ENCODE measurements at regions of chr17 and their contacts with region 1.

Region 1: GRCh38 chr17:6651357-6651918 is at the starts of genes C17orf100 and MED31:
- DNase-seq: peak; percentile 90 to 97 (median 94)
- ATAC-seq: peak; percentile 88
- H3K4me3 ChIP-seq: peak within 1 kb of the TSS; percentile 84 to 86
- H3K4me3 Mint-ChIP-seq: peak within 1 kb of the TSS; percentile 97
- H3K27ac ChIP-seq: peak within 1 kb of the TSS; percentile 99 to 100
- H3K27ac Mint-ChIP-seq: peak within 1 kb of the TSS; percentile 100
- H3K4me1 ChIP-seq: peaks cover 23% of the 10 kb centered on the region
- H3K4me1 Mint-ChIP-seq: peaks cover 69% of the 10 kb centered on the region
- H3K27me3 ChIP-seq: no peaks in the 10 kb centered on the region
- H3K27me3 Mint-ChIP-seq: no peaks in the 10 kb centered on the region
- CTCF ChIP-seq: no peak
- total RNA-seq, gene C17orf100: 0.39 to 0.73 TPM
- total RNA-seq, gene MED31: 21.4 to 25.6 TPM

Region 2: DNA sequence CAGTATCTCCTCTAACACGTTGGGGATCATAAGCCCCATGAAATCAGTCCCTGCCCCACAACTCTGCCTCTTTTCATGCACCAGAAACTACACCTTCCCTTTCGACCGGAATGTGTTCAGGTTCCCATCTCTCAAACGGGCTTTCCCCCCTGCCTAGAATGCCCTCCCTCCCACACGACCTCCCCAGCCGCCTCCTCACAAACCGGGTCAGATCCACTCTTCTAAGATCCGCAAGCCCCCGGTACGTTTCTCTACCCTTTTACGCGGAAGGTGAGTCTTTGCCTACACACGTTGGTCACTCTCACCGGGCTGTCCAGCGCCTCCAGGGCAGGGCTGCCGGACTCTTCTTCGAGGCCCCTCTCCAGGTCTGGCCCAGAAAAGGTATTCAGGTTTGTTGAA is 1183.4 kb before region 1 on chr17:
- CTCF ChIA-PET with region 1: no interaction called
- POLR2A ChIA-PET with region 1: no interaction called
- intact Hi-C with region 1: loop called in 1 of 2 experiments (anchors 10 kb)
- DNase-seq: peak in 4 of 9 experiments; percentile 9 to 45 (median 18)
- ATAC-seq: peak; percentile 16
- H3K4me3 ChIP-seq: peak overlapping the region; percentile 78 to 84
- H3K4me3 Mint-ChIP-seq: peak overlapping the region; percentile 81
- H3K27ac ChIP-seq: peak overlapping the region; percentile 49 to 53
- H3K27ac Mint-ChIP-seq: peak overlapping the region; percentile 46
- H3K4me1 ChIP-seq: peaks cover 10% of the 10 kb centered on the region
- H3K4me1 Mint-ChIP-seq: peaks cover 31% of the 10 kb centered on the region
- H3K27me3 ChIP-seq: no peaks in the 10 kb centered on the region
- H3K27me3 Mint-ChIP-seq: no peaks in the 10 kb centered on the region
- CTCF ChIP-seq: no peak

Region 3: GRCh38 chr17:6443692-6444569 is 207.5 kb before region 1 on chr17 and contains the start of gene PIMREG:
- CTCF ChIA-PET with region 1: no interaction called
- POLR2A ChIA-PET with region 1: no interaction called
- intact Hi-C with region 1: loop called (anchors 5 to 10 kb)
- DNase-seq: peak; percentile 79 to 91 (median 90)
- ATAC-seq: peak; percentile 96
- H3K4me3 ChIP-seq: peak within 1 kb of the TSS; percentile 68 to 94
- H3K4me3 Mint-ChIP-seq: peak within 1 kb of the TSS; percentile 85
- H3K27ac ChIP-seq: peak within 1 kb of the TSS; percentile 25 to 37
- H3K27ac Mint-ChIP-seq: peak within 1 kb of the TSS; percentile 77
- H3K4me1 ChIP-seq: peaks cover 6% of the 10 kb centered on the region
- H3K4me1 Mint-ChIP-seq: peaks cover 12% of the 10 kb centered on the region
- H3K27me3 ChIP-seq: no peaks in the 10 kb centered on the region
- H3K27me3 Mint-ChIP-seq: peaks cover 10% of the 10 kb centered on the region
- CTCF ChIP-seq: no peak
- total RNA-seq, gene PIMREG: not detected

Region 4: DNA sequence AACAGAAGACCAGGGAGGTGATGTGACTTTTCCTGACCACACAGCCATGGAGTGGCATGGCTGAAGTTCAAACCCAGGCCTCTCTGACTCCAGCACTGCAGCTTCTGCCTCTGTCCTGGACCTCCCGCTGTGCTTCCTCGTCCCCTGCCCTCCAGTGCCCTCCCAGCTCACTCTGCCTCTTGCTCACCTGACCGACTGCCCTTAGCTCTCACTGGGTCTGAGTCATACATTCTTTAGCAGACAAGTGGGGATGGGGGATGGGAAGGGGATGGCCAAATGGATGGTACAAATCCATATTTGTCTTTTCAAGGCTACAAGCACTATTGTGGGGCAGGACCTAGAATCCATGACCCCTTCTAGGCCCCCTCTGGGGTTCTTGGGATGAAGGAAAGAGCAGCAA is 128.1 kb before region 1 on chr17:
- CTCF ChIA-PET with region 1: no interaction called
- POLR2A ChIA-PET with region 1: no interaction called
- intact Hi-C with region 1: no loop called
- DNase-seq: no peak
- ATAC-seq: no peak
- H3K4me3 ChIP-seq: no peak overlapping the region
- H3K4me3 Mint-ChIP-seq: no peak overlapping the region
- H3K27ac ChIP-seq: no peak overlapping the region
- H3K27ac Mint-ChIP-seq: no peak overlapping the region
- H3K4me1 ChIP-seq: no peaks in the 10 kb centered on the region
- H3K4me1 Mint-ChIP-seq: no peaks in the 10 kb centered on the region
- H3K27me3 ChIP-seq: no peaks in the 10 kb centered on the region
- H3K27me3 Mint-ChIP-seq: no peaks in the 10 kb centered on the region
- CTCF ChIP-seq: no peak

Region 5: GRCh38 chr17:6753006-6753445 is 101.6 kb after region 1 on chr17:
- CTCF ChIA-PET with region 1: no interaction called
- POLR2A ChIA-PET with region 1: no interaction called
- intact Hi-C with region 1: loop called in 1 of 2 experiments (anchors 5 kb)
- DNase-seq: peak in 8 of 9 experiments; percentile 42 to 86 (median 56)
- ATAC-seq: peak; percentile 46
- H3K4me3 ChIP-seq: no peak overlapping the region
- H3K4me3 Mint-ChIP-seq: peak overlapping the region; percentile 4
- H3K27ac ChIP-seq: peak overlapping the region in 1 of 2 experiments; percentile 66
- H3K27ac Mint-ChIP-seq: peak overlapping the region; percentile 62
- H3K4me1 ChIP-seq: peaks cover 51% of the 10 kb centered on the region
- H3K4me1 Mint-ChIP-seq: peaks cover 45% of the 10 kb centered on the region
- H3K27me3 ChIP-seq: no peaks in the 10 kb centered on the region
- H3K27me3 Mint-ChIP-seq: no peaks in the 10 kb centered on the region
- CTCF ChIP-seq: no peak

Region 6: DNA sequence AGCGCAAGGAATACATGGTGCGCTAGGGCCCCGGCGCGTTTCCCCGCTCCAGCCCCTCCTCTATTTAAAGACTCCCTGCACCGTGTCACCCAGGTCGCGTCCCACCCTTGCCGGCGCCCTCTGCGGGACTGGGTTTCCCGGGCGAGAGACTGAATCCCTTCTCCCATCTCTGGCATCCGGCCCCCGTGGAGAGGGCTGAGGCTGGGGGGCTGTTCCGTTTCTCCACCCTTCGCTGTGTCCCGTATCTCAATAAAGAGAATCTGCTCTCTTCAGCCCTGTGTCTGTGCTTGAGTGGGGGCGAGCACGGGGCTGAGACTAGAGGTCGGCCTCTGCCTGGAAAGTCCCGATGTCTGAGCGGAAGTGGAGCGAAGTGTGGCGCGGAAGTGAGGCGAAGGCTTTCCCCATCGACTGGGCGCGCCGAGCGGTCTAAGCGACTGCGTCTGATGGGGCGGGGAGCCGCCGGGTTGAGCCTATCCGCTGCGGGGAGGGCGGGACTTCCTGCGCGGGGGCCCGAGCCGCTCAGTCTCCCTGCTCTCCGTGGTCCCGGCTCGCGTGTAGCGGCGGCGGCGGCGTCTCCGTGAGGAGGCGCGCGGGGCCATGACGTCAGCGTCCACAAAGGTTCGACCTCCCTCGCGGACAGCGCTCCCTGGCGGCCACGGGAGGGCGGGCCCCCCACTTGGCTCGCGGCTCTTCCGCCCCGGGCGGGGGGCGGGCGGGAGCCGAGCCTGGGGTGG is 363.0 kb after region 1 on chr17:
- CTCF ChIA-PET with region 1: no interaction called
- POLR2A ChIA-PET with region 1: no interaction called
- intact Hi-C with region 1: loop called in 1 of 2 experiments (anchors 1 kb)
- DNase-seq: peak; percentile 94 to 100 (median 97)
- ATAC-seq: peak; percentile 79
- H3K4me3 ChIP-seq: peak overlapping the region; percentile 69 to 70
- H3K4me3 Mint-ChIP-seq: peak overlapping the region; percentile 98
- H3K27ac ChIP-seq: peak overlapping the region; percentile 95 to 99
- H3K27ac Mint-ChIP-seq: peak overlapping the region; percentile 100
- H3K4me1 ChIP-seq: peaks cover 63% of the 10 kb centered on the region
- H3K4me1 Mint-ChIP-seq: peaks cover 78% of the 10 kb centered on the region
- H3K27me3 ChIP-seq: no peaks in the 10 kb centered on the region
- H3K27me3 Mint-ChIP-seq: no peaks in the 10 kb centered on the region
- CTCF ChIP-seq: peak; percentile 61